ENCODE measurements at regions of chr12 and their contacts with region 1.

Region 1: GRCh38 chr12:123633379-123634141 is at the starts of genes EIF2B1 and GTF2H3:
- DNase-seq: peak; percentile 93 to 98
- H3K4me3 ChIP-seq: peak within 1 kb of the TSS; percentile 75 to 94 (median 92)
- H3K27ac ChIP-seq: peak within 1 kb of the TSS; percentile 81
- H3K4me1 ChIP-seq: peaks cover 0 to 4% (median 0%) of the 10 kb centered on the region in 4 experiments; a peak in 3 of 7 replicates
- H3K27me3 ChIP-seq: no peaks in the 10 kb centered on the region
- CTCF ChIP-seq: no peak
- EP300 ChIP-seq: peak in 1 of 2 experiments; percentile 59; a peak in 1 of 3 replicates
- POLR2A ChIP-seq: peak; percentile 96 to 99
- RAD21 ChIP-seq: no peak
- total RNA-seq, gene EIF2B1: 48.3 and 49.9 TPM in 2 replicates
- total RNA-seq, gene GTF2H3: 32.1 and 35.8 TPM in 2 replicates

Region 2: GRCh38 chr12:123621619-123622530 is 11.7 kb before region 1 on chr12:
- CTCF ChIA-PET with region 1: interaction called, 8 read pairs
- POLR2A ChIA-PET with region 1: interaction called, 10 read pairs
- DNase-seq: no peak
- H3K4me3 ChIP-seq: no peak overlapping the region
- H3K27ac ChIP-seq: no peak overlapping the region
- H3K4me1 ChIP-seq: no peaks in the 10 kb centered on the region
- H3K27me3 ChIP-seq: no peaks in the 10 kb centered on the region
- CTCF ChIP-seq: no peak
- EP300 ChIP-seq: no peak
- POLR2A ChIP-seq: peak in 1 of 2 experiments; percentile 15; a peak in 1 of 3 replicates
- RAD21 ChIP-seq: no peak

Region 3: GRCh38 chr12:123713398-123713797 is 79.8 kb after region 1 on chr12:
- CTCF ChIA-PET with region 1: no interaction called
- POLR2A ChIA-PET with region 1: interaction called, 14 read pairs
- DNase-seq: no peak
- H3K4me3 ChIP-seq: peak overlapping the region; percentile 74 to 90 (median 80); a peak in 7 of 8 replicates
- H3K27ac ChIP-seq: no peak overlapping the region
- H3K4me1 ChIP-seq: peaks cover 0 to 9% (median 3%) of the 10 kb centered on the region in 4 experiments; a peak in 5 of 7 replicates
- H3K27me3 ChIP-seq: no peaks in the 10 kb centered on the region; a peak in 1 of 7 replicates
- CTCF ChIP-seq: no peak
- EP300 ChIP-seq: no peak
- POLR2A ChIP-seq: no peak
- RAD21 ChIP-seq: no peak